CD4-positive, alpha-beta memory T cell (primary cell): ENCODE measurements at regions of chr2 and their contacts with region 1.

Region 1: DNA sequence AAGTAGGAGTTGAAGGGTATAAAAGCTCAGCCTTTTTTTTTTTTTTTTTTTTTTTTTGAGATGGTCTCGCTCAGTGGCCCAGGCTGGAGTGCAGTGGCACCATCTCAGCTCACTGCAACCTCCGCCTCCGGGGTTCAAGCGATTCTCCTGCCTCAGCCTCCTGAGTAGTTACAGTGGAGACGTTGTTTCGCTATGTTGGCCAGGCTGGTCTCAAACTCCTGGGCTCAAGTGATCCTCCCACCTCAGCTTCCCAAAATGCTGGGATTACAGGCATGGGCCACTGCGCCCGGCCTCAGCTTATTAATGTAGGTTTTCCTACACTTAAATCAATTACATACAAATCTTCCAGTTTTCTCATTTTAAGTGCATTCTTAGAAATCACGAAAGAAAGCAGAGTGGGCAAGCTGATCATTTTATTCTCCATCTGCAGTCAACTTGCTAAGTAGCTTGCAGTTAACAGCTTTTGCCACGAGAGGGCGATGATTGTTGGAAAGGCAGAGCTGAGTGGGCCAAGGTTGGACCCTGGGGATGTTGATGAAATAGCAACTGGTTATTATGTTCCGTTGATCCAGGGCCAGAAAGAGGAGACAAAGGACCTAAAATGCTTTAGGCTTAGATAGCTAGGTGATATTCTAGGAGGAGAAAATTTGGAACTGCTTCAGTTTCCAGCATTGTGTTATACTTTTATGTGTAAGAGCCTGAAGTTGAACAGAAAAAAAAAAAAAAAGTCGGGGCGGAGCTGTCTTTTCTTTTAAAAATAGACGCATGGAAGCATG is 234.4 kb upstream of the EPAS1 start:
- DNase-seq: peak; percentile 45 to 64 (median 52)
- H3K4me3 ChIP-seq: no peak overlapping the region
- H3K4me3 Mint-ChIP-seq: no peak overlapping the region
- H3K27ac ChIP-seq: no peak overlapping the region
- H3K27ac Mint-ChIP-seq: no peak overlapping the region
- H3K4me1 ChIP-seq: no peaks in the 10 kb centered on the region
- H3K4me1 Mint-ChIP-seq: peaks cover 8 to 14% (median 11%) of the 10 kb centered on the region in 4 donors
- H3K27me3 ChIP-seq: no peaks in the 10 kb centered on the region
- H3K27me3 Mint-ChIP-seq: peaks cover 0 to 2% of the 10 kb centered on the region in 2 donors

Region 2: GRCh38 chr2:46045888-46046287 is 16.9 kb before region 1 on chr2:
- CTCF ChIA-PET with region 1: interaction called, 13 read pairs
- POLR2A ChIA-PET with region 1: no interaction called
- intact Hi-C with region 1: no loop called
- DNase-seq: no peak
- H3K4me3 ChIP-seq: no peak overlapping the region
- H3K4me3 Mint-ChIP-seq: no peak overlapping the region
- H3K27ac ChIP-seq: no peak overlapping the region
- H3K27ac Mint-ChIP-seq: no peak overlapping the region
- H3K4me1 ChIP-seq: no peaks in the 10 kb centered on the region
- H3K4me1 Mint-ChIP-seq: no peaks in the 10 kb centered on the region
- H3K27me3 ChIP-seq: no peaks in the 10 kb centered on the region
- H3K27me3 Mint-ChIP-seq: no peaks in the 10 kb centered on the region

Region 3: DNA sequence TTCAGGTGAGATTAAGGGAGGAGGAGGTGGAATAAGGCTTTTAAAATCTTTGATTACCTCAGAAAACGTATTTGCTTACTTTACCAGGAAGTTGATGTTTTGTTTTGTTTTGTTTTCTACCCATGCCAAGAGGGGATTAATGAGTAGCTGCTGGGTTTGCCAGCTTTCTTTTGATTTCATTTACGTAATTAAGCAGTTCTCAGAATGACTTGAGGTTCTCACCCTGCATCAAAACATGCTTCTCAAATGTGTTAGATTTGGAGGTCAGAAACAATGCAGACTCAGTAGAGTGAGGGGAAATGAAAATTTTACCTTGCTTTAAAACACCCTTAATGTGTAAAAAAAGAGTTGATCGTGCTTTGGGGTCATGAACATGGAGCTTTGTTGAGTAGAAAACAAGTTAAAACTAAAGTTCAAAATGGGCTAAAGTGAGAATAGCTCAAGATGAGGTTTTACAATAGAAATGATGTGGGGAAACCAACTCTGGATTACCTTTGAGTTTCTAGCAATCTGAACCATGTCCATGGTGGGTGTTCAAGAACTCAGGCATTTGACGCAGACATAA is 17.3 kb after region 1 on chr2:
- CTCF ChIA-PET with region 1: interaction called, 13 read pairs
- POLR2A ChIA-PET with region 1: no interaction called
- intact Hi-C with region 1: no loop called
- DNase-seq: no peak
- H3K4me3 ChIP-seq: no peak overlapping the region
- H3K4me3 Mint-ChIP-seq: no peak overlapping the region
- H3K27ac ChIP-seq: no peak overlapping the region
- H3K27ac Mint-ChIP-seq: peak overlapping the region in 1 of 7 donors; percentile 17
- H3K4me1 ChIP-seq: peaks cover 4% of the 10 kb centered on the region
- H3K4me1 Mint-ChIP-seq: peaks cover 5 to 12% (median 11%) of the 10 kb centered on the region in 4 donors
- H3K27me3 ChIP-seq: no peaks in the 10 kb centered on the region
- H3K27me3 Mint-ChIP-seq: no peaks in the 10 kb centered on the region

Region 4: DNA sequence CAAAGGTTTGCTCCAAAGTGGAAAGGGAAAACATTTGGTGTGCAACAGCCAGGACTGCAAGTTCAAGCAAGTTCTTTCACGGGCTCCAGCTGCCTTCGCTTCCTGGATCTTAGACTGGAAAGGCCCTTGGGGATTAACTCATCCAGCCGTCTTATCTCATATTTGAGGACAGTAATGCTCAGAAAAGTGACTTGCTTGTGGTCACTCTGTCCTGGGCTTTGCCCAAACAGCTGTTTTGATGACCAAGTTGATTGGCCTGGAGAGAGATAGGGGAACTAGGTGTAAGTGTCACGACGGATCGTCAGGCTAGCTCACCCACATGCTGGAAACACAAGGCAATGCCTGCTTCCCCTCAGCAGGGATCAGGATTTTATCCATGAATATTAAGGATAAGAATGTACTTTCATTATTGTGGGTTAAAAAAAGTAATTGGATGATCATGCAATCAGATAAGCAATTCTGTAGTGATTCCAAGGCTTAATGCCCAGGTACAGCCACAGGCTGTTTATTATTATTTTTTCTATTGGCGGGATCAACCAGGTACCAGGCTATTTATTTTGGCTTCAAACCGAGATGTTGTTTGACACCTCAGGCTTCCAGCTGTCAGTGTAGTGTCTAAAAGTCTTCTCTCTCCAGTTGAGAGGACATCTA is 71.8 kb after region 1 on chr2:
- CTCF ChIA-PET with region 1: no interaction called
- POLR2A ChIA-PET with region 1: no interaction called
- intact Hi-C with region 1: no loop called
- DNase-seq: no peak
- H3K4me3 ChIP-seq: no peak overlapping the region
- H3K4me3 Mint-ChIP-seq: no peak overlapping the region
- H3K27ac ChIP-seq: no peak overlapping the region
- H3K27ac Mint-ChIP-seq: no peak overlapping the region
- H3K4me1 ChIP-seq: no peaks in the 10 kb centered on the region
- H3K4me1 Mint-ChIP-seq: no peaks in the 10 kb centered on the region
- H3K27me3 ChIP-seq: no peaks in the 10 kb centered on the region
- H3K27me3 Mint-ChIP-seq: no peaks in the 10 kb centered on the region

Region 5: DNA sequence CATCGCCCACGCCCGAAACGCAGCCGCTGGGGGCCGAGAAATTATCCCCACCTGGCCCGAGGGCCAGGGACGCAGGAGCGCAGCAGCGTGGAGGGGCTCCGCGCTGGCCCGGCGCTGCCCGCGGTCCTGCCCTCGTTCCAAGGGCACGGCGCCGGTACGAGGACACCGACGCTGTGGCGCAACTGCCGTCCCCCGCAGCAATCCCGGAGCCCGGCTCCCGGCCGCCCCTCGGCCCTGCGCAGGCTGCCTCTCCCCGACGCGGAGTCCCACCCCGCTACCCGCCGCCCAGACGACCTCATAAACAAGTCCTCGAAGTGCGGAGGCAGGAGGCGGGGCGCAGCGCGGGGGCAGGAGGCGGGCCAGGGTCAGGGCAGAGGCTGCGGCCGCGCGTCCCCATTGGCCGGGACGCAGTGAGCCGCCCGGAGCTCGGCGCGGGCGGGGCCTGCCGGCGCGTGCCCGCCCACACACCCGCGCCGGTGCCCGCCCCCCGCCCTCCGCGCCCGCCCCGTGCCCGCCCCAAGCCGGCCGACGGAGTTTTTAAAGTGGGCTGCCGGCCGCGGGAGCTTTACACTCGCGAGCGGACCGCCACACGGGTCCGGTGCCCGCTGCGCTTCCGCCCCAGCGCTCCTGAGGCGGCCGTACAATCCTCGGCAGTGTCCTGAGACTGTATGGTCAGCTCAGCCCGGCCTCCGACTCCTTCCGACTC is 234.2 kb after region 1 on chr2 and contains the start of gene EPAS1:
- CTCF ChIA-PET with region 1: interaction called, 18 read pairs
- POLR2A ChIA-PET with region 1: no interaction called
- intact Hi-C with region 1: loop called (anchors 1 kb)
- DNase-seq: peak; percentile 71 to 88 (median 75)
- H3K4me3 ChIP-seq: peak within 1 kb of the TSS; percentile 45 to 72
- H3K4me3 Mint-ChIP-seq: peak within 1 kb of the TSS; percentile 87 to 96 (median 92)
- H3K27ac ChIP-seq: no peak within 1 kb of the TSS
- H3K27ac Mint-ChIP-seq: peak within 1 kb of the TSS; percentile 68 to 94 (median 89)
- H3K4me1 ChIP-seq: peaks cover 29% of the 10 kb centered on the region
- H3K4me1 Mint-ChIP-seq: peaks cover 14 to 47% (median 24%) of the 10 kb centered on the region in 4 donors
- H3K27me3 ChIP-seq: peaks cover 21% of the 10 kb centered on the region
- H3K27me3 Mint-ChIP-seq: peaks cover 22 to 26% of the 10 kb centered on the region in 2 donors
- total RNA-seq, gene EPAS1: 2.3 to 2.7 TPM

Region 6: GRCh38 chr2:46356991-46357390 is 294.2 kb after region 1 on chr2:
- CTCF ChIA-PET with region 1: interaction called, 48 read pairs
- POLR2A ChIA-PET with region 1: no interaction called
- intact Hi-C with region 1: no loop called
- DNase-seq: no peak
- H3K4me3 ChIP-seq: no peak overlapping the region
- H3K4me3 Mint-ChIP-seq: no peak overlapping the region
- H3K27ac ChIP-seq: no peak overlapping the region
- H3K27ac Mint-ChIP-seq: peak overlapping the region in 1 of 7 donors; percentile 38
- H3K4me1 ChIP-seq: peaks cover 34% of the 10 kb centered on the region
- H3K4me1 Mint-ChIP-seq: peaks cover 31 to 76% (median 54%) of the 10 kb centered on the region in 4 donors
- H3K27me3 ChIP-seq: no peaks in the 10 kb centered on the region
- H3K27me3 Mint-ChIP-seq: no peaks in the 10 kb centered on the region

Region 7: DNA sequence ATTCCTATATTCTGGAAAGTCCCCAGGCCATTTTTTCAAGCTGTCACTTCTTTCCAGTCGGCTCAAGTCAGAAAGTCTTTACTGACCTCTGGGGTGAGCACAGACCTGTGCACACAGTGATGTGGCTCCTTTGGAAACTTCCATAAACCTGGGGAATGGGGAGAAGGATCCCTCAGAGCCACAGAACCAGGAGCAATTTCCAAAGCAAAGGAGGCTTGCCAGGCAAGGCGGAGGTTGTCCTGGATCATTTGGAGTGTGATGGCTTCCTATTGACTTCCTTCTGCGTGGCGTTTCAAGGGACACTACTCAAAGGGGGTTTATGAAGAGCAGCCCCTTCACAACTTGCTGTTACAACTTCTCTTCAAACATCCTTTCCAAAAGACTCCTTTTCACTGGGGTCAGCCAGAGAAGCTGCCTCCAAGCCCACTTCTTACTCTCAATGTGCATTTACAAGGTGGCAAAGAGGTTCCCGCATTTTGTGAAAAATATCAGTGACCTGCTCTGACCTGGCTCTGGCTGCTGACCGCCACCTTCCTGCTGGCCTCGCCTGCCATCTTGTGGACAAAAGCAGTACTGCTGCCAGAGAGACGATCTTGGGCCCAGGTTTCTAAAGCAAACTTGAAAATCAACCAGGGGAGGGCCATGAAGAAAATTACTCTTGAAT is 398.3 kb after region 1 on chr2:
- CTCF ChIA-PET with region 1: interaction called, 24 read pairs
- POLR2A ChIA-PET with region 1: no interaction called
- intact Hi-C with region 1: no loop called
- DNase-seq: peak; percentile 53 to 71 (median 61)
- H3K4me3 ChIP-seq: no peak overlapping the region
- H3K4me3 Mint-ChIP-seq: no peak overlapping the region
- H3K27ac ChIP-seq: no peak overlapping the region
- H3K27ac Mint-ChIP-seq: peak overlapping the region in 2 of 7 donors; percentile 51 to 81
- H3K4me1 ChIP-seq: peaks cover 7% of the 10 kb centered on the region
- H3K4me1 Mint-ChIP-seq: peaks cover 4 to 12% (median 10%) of the 10 kb centered on the region in 4 donors
- H3K27me3 ChIP-seq: no peaks in the 10 kb centered on the region
- H3K27me3 Mint-ChIP-seq: peaks cover 0 to 2% of the 10 kb centered on the region in 2 donors